ENCODE measurements at regions of chr3 and their contacts with region 1.

Region 1: GRCh38 chr3:105518806-105519418 is 152.2 kb downstream of the ALCAM start:
- DNase-seq: peak in 4 of 9 experiments; percentile 13 to 70 (median 42)
- ATAC-seq: peak; percentile 63
- H3K4me3 ChIP-seq: no peak overlapping the region
- H3K4me3 Mint-ChIP-seq: no peak overlapping the region
- H3K27ac ChIP-seq: no peak overlapping the region
- H3K27ac Mint-ChIP-seq: no peak overlapping the region
- H3K4me1 ChIP-seq: no peaks in the 10 kb centered on the region
- H3K4me1 Mint-ChIP-seq: peaks cover 4% of the 10 kb centered on the region
- H3K27me3 ChIP-seq: no peaks in the 10 kb centered on the region
- H3K27me3 Mint-ChIP-seq: no peaks in the 10 kb centered on the region
- CTCF ChIP-seq: peak; percentile 68

Region 2: GRCh38 chr3:104564045-104564643 is 954.8 kb before region 1 on chr3:
- CTCF ChIA-PET with region 1: no interaction called
- POLR2A ChIA-PET with region 1: no interaction called
- intact Hi-C with region 1: loop called (anchors 1 to 2 kb)
- DNase-seq: peak; percentile 15 to 64 (median 57)
- ATAC-seq: peak; percentile 44
- H3K4me3 ChIP-seq: no peak overlapping the region
- H3K4me3 Mint-ChIP-seq: no peak overlapping the region
- H3K27ac ChIP-seq: no peak overlapping the region
- H3K27ac Mint-ChIP-seq: no peak overlapping the region
- H3K4me1 ChIP-seq: no peaks in the 10 kb centered on the region
- H3K4me1 Mint-ChIP-seq: no peaks in the 10 kb centered on the region
- H3K27me3 ChIP-seq: no peaks in the 10 kb centered on the region
- H3K27me3 Mint-ChIP-seq: no peaks in the 10 kb centered on the region
- CTCF ChIP-seq: peak; percentile 91

Region 3: GRCh38 chr3:104596551-104596950 is 922.4 kb before region 1 on chr3:
- CTCF ChIA-PET with region 1: interaction called, 3 read pairs
- POLR2A ChIA-PET with region 1: no interaction called
- intact Hi-C with region 1: loop called in 1 of 2 experiments (anchors 10 kb)
- DNase-seq: peak in 2 of 9 experiments; percentile 34 to 41
- ATAC-seq: no peak
- H3K4me3 ChIP-seq: no peak overlapping the region
- H3K4me3 Mint-ChIP-seq: no peak overlapping the region
- H3K27ac ChIP-seq: no peak overlapping the region
- H3K27ac Mint-ChIP-seq: no peak overlapping the region
- H3K4me1 ChIP-seq: no peaks in the 10 kb centered on the region
- H3K4me1 Mint-ChIP-seq: no peaks in the 10 kb centered on the region
- H3K27me3 ChIP-seq: no peaks in the 10 kb centered on the region
- H3K27me3 Mint-ChIP-seq: no peaks in the 10 kb centered on the region
- CTCF ChIP-seq: peak; percentile 17

Region 4: DNA sequence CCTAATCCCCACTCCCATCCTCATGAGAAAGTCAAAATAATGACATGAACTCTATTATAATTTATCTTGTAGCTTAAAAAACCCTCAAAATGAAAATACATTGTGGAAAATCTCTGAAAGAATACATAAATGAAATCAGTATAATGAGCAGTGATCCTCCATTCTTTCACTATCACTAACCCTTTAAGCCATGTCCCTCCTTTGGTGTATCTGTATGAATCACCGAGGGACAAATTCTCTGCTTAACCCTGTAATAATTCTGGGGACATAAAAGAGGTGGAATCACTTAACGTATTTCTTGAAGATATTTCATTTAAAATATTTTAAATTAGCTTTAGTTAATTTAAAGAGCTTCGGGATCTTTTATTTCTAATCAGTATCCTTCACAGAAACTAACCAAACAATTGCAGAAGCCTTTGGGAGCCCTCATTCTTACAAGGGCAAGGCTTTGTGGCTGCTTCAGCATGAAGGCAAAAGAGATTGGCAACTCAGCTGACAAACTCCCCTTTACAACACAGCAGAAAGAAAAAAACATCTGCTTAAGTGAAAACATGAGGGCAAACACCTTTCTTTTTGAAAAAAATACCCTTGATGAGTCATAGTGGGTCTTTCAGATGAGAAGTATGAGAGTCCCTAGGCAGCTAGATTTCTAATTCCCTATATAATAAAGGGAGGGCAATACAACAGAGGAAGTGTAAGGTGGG is 196.2 kb before region 1 on chr3:
- CTCF ChIA-PET with region 1: no interaction called
- POLR2A ChIA-PET with region 1: no interaction called
- intact Hi-C with region 1: no loop called
- DNase-seq: no peak
- ATAC-seq: no peak
- H3K4me3 ChIP-seq: no peak overlapping the region
- H3K4me3 Mint-ChIP-seq: no peak overlapping the region
- H3K27ac ChIP-seq: no peak overlapping the region
- H3K27ac Mint-ChIP-seq: no peak overlapping the region
- H3K4me1 ChIP-seq: no peaks in the 10 kb centered on the region
- H3K4me1 Mint-ChIP-seq: no peaks in the 10 kb centered on the region
- H3K27me3 ChIP-seq: no peaks in the 10 kb centered on the region
- H3K27me3 Mint-ChIP-seq: no peaks in the 10 kb centered on the region
- CTCF ChIP-seq: no peak

Region 5: GRCh38 chr3:106609666-106610301 is 1090.9 kb after region 1 on chr3:
- CTCF ChIA-PET with region 1: interaction called, 3 read pairs
- POLR2A ChIA-PET with region 1: no interaction called
- intact Hi-C with region 1: loop called (anchors 2 to 5 kb)
- DNase-seq: peak; percentile 37 to 81 (median 56)
- ATAC-seq: peak; percentile 76
- H3K4me3 ChIP-seq: no peak overlapping the region
- H3K4me3 Mint-ChIP-seq: no peak overlapping the region
- H3K27ac ChIP-seq: no peak overlapping the region
- H3K27ac Mint-ChIP-seq: no peak overlapping the region
- H3K4me1 ChIP-seq: no peaks in the 10 kb centered on the region
- H3K4me1 Mint-ChIP-seq: peaks cover 4% of the 10 kb centered on the region
- H3K27me3 ChIP-seq: no peaks in the 10 kb centered on the region
- H3K27me3 Mint-ChIP-seq: no peaks in the 10 kb centered on the region
- CTCF ChIP-seq: peak; percentile 88

Measured in CD8-positive, alpha-beta T cell (primary cell).